Right ventricle myocardium inferior (tissue), 1 donor: ENCODE measurements at regions of chr13 and their contacts with region 1.

Region 1: GRCh38 chr13:97302611-97303010 is 80.5 kb downstream of the MBNL2 start:
- DNase-seq: no peak
- ATAC-seq: peak; percentile 78

Region 2: DNA sequence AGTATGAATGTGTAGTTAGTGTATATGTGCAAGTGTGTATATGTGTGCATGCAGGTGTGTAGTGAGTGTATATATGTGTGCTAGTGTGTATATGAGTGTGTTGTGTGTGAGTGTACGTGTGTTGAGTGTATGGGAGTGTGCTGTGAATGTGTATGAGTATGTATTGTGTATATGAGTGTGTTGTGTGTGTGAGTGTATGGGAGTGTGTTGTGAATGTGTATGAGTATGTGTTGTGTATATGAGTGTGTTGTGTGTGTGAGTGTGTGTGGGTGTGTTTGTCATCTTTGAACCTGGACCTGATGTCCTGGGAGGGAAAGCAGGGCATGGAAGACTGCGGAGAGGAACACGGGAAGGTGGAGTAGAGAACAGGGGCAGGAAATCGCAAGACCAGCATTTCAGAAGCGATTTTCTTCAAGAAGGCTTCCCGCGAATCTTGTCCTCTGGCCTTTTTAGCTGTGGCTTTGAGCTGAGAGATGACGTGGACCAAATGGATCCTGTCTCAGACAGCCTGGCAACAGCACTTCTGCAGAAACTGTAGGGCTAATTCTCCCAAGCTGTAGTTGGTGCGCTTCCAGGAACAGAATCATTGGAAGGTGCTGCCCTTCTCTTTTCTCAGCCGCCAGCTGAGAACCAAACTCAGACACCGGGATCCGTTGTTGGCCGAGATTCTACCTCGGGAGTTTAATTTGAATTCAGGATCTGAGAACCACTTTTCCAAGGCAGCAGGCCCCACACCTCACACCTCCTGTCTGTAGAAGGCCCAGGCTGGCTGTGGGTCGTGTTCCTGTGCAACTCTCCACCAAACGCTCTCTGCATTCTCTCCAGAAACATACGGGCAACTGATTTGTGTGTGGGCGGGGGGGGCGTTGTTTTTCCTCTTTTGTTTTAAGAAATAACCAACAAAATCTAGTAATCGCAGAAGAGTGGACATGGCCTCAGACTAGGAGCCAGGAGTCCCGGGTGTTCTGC is 36.7 kb after region 1 on chr13:
- intact Hi-C with region 1: loop called (anchors 5 kb)
- DNase-seq: peak; percentile 56
- ATAC-seq: peak; percentile 89